IMR-90 (cell line): ENCODE measurements at regions of chr7 and their contacts with region 1.

Region 1: DNA sequence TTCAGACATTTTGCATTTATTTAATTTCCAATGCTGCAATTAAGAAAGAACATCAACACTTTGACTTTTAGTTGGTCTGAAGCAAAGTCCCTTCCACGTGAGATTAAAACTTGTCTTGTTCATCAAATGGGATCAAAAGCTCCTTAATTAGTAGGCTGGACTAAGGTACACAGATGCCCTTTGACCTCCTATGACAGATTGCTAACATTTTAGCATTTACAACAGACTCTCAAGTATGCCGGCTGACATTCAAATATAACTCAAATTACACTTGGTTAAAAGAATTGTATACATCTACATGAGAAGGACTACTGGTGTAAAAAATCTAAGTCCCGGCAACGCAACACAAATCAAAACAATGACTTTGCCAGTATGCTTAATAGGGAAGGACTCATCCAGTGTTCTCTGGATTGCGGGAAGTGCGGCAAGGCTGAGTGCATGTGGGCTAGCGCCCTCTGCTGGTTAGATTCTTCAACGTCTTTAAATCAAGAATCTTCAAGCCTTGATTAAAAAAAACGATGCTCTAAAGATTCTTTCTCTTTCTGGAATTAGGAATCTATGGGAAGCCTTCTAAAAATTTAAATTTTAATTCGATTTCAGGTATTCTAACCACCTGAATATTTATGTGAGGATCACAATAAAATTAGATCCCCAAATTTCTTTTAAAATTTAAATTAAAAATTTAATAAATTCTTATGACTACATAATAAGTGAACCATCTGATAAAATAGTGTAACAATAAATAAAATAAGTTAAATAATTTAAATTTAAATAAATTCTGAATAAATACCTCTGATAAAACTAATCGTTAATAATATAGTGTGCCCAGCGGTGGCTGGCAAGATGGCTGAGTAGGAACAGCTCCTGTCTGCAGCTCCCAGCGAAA is 444.7 kb downstream of the DGKB start:
- DNase-seq: peak; percentile 82
- ATAC-seq: peak; percentile 91
- H3K4me3 ChIP-seq: no peak overlapping the region
- H3K27ac ChIP-seq: no peak overlapping the region
- H3K4me1 ChIP-seq: no peaks in the 10 kb centered on the region
- H3K27me3 ChIP-seq: no peaks in the 10 kb centered on the region
- CTCF ChIP-seq: peak; percentile 84
- POLR2A ChIP-seq: no peak
- RAD21 ChIP-seq: peak; percentile 91

Region 2: GRCh38 chr7:13524076-13524475 is 933.7 kb before region 1 on chr7:
- CTCF ChIA-PET with region 1: interaction called, 3 read pairs
- POLR2A ChIA-PET with region 1: no interaction called
- dilution Hi-C with region 1: no loop called
- in situ Hi-C with region 1: loop called (anchors 10 kb)
- intact Hi-C with region 1: loop called (anchors 1 kb)
- DNase-seq: no peak
- ATAC-seq: no peak
- H3K4me3 ChIP-seq: no peak overlapping the region
- H3K27ac ChIP-seq: no peak overlapping the region
- H3K4me1 ChIP-seq: no peaks in the 10 kb centered on the region
- H3K27me3 ChIP-seq: no peaks in the 10 kb centered on the region
- CTCF ChIP-seq: no peak
- POLR2A ChIP-seq: no peak
- RAD21 ChIP-seq: no peak

Region 3: DNA sequence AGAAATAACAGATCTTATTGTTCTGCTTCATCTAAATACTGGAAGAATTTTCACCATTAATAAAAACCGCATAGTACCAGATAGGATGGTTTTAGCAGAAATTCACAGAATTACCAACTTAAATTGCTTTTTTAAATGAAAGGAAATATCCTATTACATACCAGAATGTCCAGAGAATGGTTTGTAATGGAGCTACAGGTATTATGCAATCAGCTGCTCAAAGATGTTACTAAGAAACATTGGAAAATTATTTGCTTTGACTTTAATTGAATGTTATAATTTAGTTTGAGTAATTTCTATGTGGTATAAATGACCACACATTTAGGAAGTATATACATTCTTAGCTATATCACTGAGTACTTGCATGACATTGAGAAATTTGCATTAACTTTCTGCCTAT is 806.6 kb before region 1 on chr7:
- CTCF ChIA-PET with region 1: no interaction called
- POLR2A ChIA-PET with region 1: no interaction called
- dilution Hi-C with region 1: no loop called
- in situ Hi-C with region 1: no loop called
- intact Hi-C with region 1: loop called (anchors 10 kb)
- DNase-seq: peak; percentile 7
- ATAC-seq: no peak
- H3K4me3 ChIP-seq: no peak overlapping the region
- H3K27ac ChIP-seq: no peak overlapping the region
- H3K4me1 ChIP-seq: no peaks in the 10 kb centered on the region
- H3K27me3 ChIP-seq: no peaks in the 10 kb centered on the region
- CTCF ChIP-seq: no peak
- POLR2A ChIP-seq: no peak
- RAD21 ChIP-seq: no peak

Region 4: GRCh38 chr7:13742811-13743210 is 715.0 kb before region 1 on chr7:
- CTCF ChIA-PET with region 1: no interaction called
- POLR2A ChIA-PET with region 1: no interaction called
- dilution Hi-C with region 1: no loop called
- in situ Hi-C with region 1: no loop called
- intact Hi-C with region 1: loop called (anchors 5 kb)
- DNase-seq: peak; percentile 56
- ATAC-seq: peak; percentile 90
- H3K4me3 ChIP-seq: no peak overlapping the region
- H3K27ac ChIP-seq: no peak overlapping the region
- H3K4me1 ChIP-seq: peaks cover 2% of the 10 kb centered on the region
- H3K27me3 ChIP-seq: no peaks in the 10 kb centered on the region
- CTCF ChIP-seq: peak; percentile 50
- POLR2A ChIP-seq: no peak
- RAD21 ChIP-seq: peak; percentile 44

Region 5: GRCh38 chr7:14691597-14692203 is 233.9 kb after region 1 on chr7:
- CTCF ChIA-PET with region 1: interaction called, 3 read pairs
- POLR2A ChIA-PET with region 1: no interaction called
- dilution Hi-C with region 1: no loop called
- in situ Hi-C with region 1: no loop called
- intact Hi-C with region 1: loop called (anchors 5 kb)
- DNase-seq: peak; percentile 30
- ATAC-seq: peak; percentile 53; the same call in 1 of the 2 replicates
- H3K4me3 ChIP-seq: no peak overlapping the region
- H3K27ac ChIP-seq: no peak overlapping the region
- H3K4me1 ChIP-seq: no peaks in the 10 kb centered on the region
- H3K27me3 ChIP-seq: no peaks in the 10 kb centered on the region
- CTCF ChIP-seq: peak; percentile 75
- POLR2A ChIP-seq: no peak
- RAD21 ChIP-seq: peak; percentile 66